ENCODE measurements at regions of chr11 and their contacts with region 1.

Region 1: DNA sequence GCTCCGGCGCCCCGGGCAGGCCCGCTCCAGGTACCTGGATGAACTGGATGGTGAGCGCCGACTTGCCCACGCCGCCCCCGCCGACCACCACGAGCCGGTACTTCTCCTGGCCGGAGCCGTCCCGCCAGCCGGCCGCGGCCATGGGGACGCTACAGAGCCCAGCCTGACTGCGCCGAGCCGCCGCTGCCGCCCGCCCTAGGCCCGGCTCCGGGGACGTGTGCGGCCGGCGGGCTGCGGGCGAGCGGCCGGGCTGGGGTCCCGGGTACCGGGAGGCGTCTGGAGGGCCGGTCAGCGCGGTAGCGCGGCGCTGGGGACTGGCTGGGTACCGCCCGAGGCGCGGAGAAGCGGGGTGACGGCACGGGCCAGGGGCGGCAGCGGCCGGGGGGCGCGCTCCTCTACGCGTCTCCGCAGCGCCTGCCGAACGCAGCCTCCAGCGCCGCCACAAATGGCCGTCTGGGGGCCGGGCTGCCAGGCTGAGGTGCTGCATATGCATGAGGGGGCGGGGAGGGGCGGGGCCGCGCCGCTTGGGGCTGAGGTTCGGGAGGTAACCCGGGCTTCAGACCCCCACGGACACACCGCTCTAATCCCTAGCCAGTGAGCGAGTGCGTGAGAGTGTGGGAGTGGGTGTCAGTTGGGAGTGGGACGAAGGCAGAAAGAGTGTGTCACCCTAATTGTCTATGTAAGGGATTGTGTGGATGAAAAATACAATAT is at the start of gene RRAS2:
- DNase-seq: peak; percentile 96
- H3K4me3 ChIP-seq: peak within 1 kb of the TSS; percentile 82 to 98 (median 92)
- H3K27ac ChIP-seq: peak within 1 kb of the TSS; percentile 80 to 90 (median 88)
- H3K4me1 ChIP-seq: peaks cover 8 to 29% (median 19%) of the 10 kb centered on the region in 4 donors
- H3K27me3 ChIP-seq: no peaks in the 10 kb centered on the region
- CTCF ChIP-seq: no peak
- EP300 ChIP-seq: no peak
- POLR2A ChIP-seq: peak; percentile 75
- total RNA-seq, gene RRAS2: 40.7 to 75.4 (median 58.0) TPM

Region 2: GRCh38 chr11:14290422-14290821 is 68.5 kb before region 1 on chr11:
- intact Hi-C with region 1: loop called (anchors 5 kb)
- DNase-seq: no peak
- H3K4me3 ChIP-seq: no peak overlapping the region
- H3K27ac ChIP-seq: no peak overlapping the region
- H3K4me1 ChIP-seq: peaks cover 0 to 11% (median 0%) of the 10 kb centered on the region in 4 donors
- H3K27me3 ChIP-seq: no peaks in the 10 kb centered on the region
- CTCF ChIP-seq: no peak
- EP300 ChIP-seq: no peak
- POLR2A ChIP-seq: no peak

Region 3: DNA sequence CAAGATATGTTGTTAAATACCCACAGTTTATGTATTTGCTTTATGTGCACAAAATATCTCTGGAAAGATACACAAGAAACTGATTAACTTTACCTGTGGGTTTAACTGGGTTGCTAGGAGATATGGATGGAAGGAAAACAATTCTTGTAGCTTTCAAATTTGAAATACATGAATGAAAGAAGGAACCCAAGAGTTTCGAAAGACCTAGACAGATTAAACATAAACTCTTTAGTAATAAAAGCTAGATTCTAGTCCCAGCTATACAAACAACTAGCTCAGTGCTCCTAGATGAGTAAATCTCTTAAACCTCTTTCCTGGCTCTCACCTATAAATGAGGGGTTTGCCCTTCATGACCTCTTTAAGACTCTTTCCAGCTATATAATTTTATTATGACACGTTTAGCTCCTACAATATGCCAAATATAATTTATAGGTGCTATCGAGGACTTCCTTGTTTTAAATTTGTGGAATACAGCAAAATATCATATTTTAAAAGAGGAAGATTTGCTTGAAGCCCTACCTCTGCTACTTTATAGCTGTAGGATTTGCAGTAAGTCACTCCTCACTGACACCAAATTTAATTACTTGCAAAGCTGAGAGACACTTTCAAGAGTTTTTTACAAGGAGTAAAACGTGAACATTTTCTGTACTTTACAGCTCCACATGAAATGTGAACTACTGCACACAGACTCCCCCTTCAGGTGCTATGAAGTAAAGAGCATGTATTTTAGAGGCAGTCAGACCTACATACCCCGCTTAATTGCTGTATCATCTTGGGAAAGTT is 50.6 kb before region 1 on chr11:
- intact Hi-C with region 1: loop called (anchors 5 kb)
- DNase-seq: no peak
- H3K4me3 ChIP-seq: no peak overlapping the region
- H3K27ac ChIP-seq: no peak overlapping the region
- H3K4me1 ChIP-seq: peaks cover 31 to 54% (median 46%) of the 10 kb centered on the region in 4 donors
- H3K27me3 ChIP-seq: no peaks in the 10 kb centered on the region
- CTCF ChIP-seq: peak; percentile 34 to 58 (median 36)
- EP300 ChIP-seq: no peak
- POLR2A ChIP-seq: no peak

Region 4: GRCh38 chr11:14422052-14422813 is 63.3 kb after region 1 on chr11:
- intact Hi-C with region 1: no loop called
- DNase-seq: peak; percentile 95
- H3K4me3 ChIP-seq: peak overlapping the region in 1 of 4 donors; percentile 6
- H3K27ac ChIP-seq: peak overlapping the region; percentile 51 to 71 (median 62)
- H3K4me1 ChIP-seq: peaks cover 39 to 48% (median 46%) of the 10 kb centered on the region in 4 donors
- H3K27me3 ChIP-seq: no peaks in the 10 kb centered on the region
- CTCF ChIP-seq: no peak
- EP300 ChIP-seq: no peak
- POLR2A ChIP-seq: no peak

Measured in esophagus muscularis mucosa (tissue), 4 donors.